ENCODE measurements at regions of chr7 and their contacts with region 1.

Region 1: DNA sequence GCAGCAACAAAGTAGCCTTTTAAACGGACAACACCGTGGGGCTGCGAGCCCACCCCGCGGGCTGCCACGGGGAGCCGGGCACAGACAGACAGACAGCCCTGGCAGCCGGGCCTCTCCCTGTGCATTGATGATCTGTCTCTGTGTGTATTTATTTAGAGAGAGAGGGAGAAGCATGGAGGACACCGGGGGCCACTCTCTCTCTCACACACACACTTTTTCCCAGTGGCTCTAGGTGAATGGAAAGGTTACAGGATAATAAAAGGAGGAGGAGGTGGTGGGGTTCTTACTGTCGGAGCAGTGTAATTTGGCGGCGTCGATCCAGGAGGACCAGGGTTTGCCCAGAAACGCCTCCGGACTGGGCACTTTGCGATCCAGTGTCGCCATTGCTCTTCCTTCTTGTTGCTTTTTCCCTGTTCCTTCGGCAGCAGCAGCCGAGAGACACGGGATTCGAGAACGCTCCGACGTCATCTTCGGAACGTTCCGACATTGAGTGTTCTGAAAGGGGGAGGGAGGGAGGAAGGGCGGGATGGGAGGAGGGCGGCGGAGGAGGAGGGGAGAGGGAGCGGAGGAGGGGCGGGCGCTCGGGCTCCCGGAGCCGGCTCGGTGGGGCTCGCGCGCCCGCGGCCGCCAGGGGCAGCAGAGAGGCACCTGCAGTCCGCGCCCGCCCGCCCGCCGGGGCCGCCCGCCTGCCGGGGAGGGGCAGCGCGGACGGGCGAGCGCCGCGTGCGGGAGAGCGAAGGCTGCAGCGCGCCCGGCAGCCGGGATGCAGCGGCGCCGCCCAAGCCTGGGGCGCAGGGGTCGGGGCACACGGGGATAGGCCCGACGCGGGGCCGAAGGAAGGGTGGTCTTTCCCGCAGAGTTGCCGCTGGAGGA is at the start of gene ATXN7L1:
- DNase-seq: peak; percentile 98
- H3K4me3 ChIP-seq: peak within 1 kb of the TSS; percentile 86 to 90
- H3K27ac ChIP-seq: peak within 1 kb of the TSS; percentile 84 to 96
- H3K4me1 ChIP-seq: peaks cover 0 to 45% of the 10 kb centered on the region in 2 experiments; a peak in 3 of 4 replicates
- H3K27me3 ChIP-seq: no peaks in the 10 kb centered on the region
- CTCF ChIP-seq: peak; percentile 37
- EP300 ChIP-seq: peak in 1 of 2 experiments; percentile 4; a peak in 2 of 4 replicates
- RAD21 ChIP-seq: peak; percentile 36
- polyA plus RNA-seq, gene ATXN7L1: 6.0 and 6.2 TPM in 2 replicates

Region 2: GRCh38 chr7:105721327-105722104 is 154.8 kb before region 1 on chr7:
- CTCF ChIA-PET with region 1: no interaction called
- POLR2A ChIA-PET with region 1: no interaction called
- DNase-seq: no peak
- H3K4me3 ChIP-seq: no peak overlapping the region
- H3K27ac ChIP-seq: no peak overlapping the region
- H3K4me1 ChIP-seq: no peaks in the 10 kb centered on the region; a peak in 1 of 4 replicates
- H3K27me3 ChIP-seq: no peaks in the 10 kb centered on the region
- CTCF ChIP-seq: no peak
- EP300 ChIP-seq: no peak
- RAD21 ChIP-seq: no peak

Region 3: GRCh38 chr7:105849122-105849855 is 27.0 kb before region 1 on chr7:
- CTCF ChIA-PET with region 1: interaction called, 13 read pairs
- POLR2A ChIA-PET with region 1: no interaction called
- DNase-seq: no peak
- H3K4me3 ChIP-seq: no peak overlapping the region
- H3K27ac ChIP-seq: no peak overlapping the region
- H3K4me1 ChIP-seq: peaks cover 14 to 21% of the 10 kb centered on the region in 2 experiments; a peak in 3 of 4 replicates
- H3K27me3 ChIP-seq: no peaks in the 10 kb centered on the region
- CTCF ChIP-seq: no peak
- EP300 ChIP-seq: no peak
- RAD21 ChIP-seq: no peak

Region 4: DNA sequence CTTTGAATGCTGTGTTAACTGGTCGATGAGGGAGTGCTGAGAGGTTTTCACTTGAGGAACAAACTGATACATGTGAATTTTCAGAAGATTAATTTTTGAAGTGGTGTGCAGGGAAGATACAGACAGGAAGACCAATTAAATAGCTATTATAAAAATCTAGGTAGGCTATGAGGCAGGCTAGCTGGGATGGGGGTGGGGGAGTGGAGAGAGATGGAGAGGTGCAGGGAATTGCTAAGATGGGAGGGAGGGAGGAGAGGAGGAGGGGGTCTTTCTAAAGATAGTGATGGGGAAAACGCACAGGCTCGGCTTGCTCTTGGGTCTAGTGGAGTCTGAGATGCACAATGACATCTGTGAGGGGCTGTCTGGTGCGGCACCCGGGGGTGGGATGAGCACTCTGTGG is 15.1 kb before region 1 on chr7:
- CTCF ChIA-PET with region 1: interaction called, 34 read pairs
- POLR2A ChIA-PET with region 1: no interaction called
- DNase-seq: no peak
- H3K4me3 ChIP-seq: no peak overlapping the region
- H3K27ac ChIP-seq: no peak overlapping the region
- H3K4me1 ChIP-seq: no peaks in the 10 kb centered on the region
- H3K27me3 ChIP-seq: no peaks in the 10 kb centered on the region
- CTCF ChIP-seq: no peak
- EP300 ChIP-seq: no peak
- RAD21 ChIP-seq: no peak

Region 5: GRCh38 chr7:105866102-105866801 is 10.1 kb before region 1 on chr7:
- CTCF ChIA-PET with region 1: interaction called, 34 read pairs
- POLR2A ChIA-PET with region 1: no interaction called
- DNase-seq: no peak
- H3K4me3 ChIP-seq: no peak overlapping the region
- H3K27ac ChIP-seq: no peak overlapping the region
- H3K4me1 ChIP-seq: no peaks in the 10 kb centered on the region
- H3K27me3 ChIP-seq: no peaks in the 10 kb centered on the region
- CTCF ChIP-seq: no peak
- EP300 ChIP-seq: no peak
- RAD21 ChIP-seq: no peak

Region 6: GRCh38 chr7:105906695-105907094 is 30.4 kb after region 1 on chr7:
- CTCF ChIA-PET with region 1: interaction called, 10 read pairs
- POLR2A ChIA-PET with region 1: no interaction called
- DNase-seq: no peak
- H3K4me3 ChIP-seq: no peak overlapping the region
- H3K27ac ChIP-seq: peak overlapping the region in 1 of 2 experiments; percentile 14; a peak in 1 of 4 replicates
- H3K4me1 ChIP-seq: peaks cover 0 to 13% of the 10 kb centered on the region in 2 experiments; a peak in 1 of 4 replicates
- H3K27me3 ChIP-seq: no peaks in the 10 kb centered on the region
- CTCF ChIP-seq: no peak
- EP300 ChIP-seq: no peak
- RAD21 ChIP-seq: no peak

Region 7: DNA sequence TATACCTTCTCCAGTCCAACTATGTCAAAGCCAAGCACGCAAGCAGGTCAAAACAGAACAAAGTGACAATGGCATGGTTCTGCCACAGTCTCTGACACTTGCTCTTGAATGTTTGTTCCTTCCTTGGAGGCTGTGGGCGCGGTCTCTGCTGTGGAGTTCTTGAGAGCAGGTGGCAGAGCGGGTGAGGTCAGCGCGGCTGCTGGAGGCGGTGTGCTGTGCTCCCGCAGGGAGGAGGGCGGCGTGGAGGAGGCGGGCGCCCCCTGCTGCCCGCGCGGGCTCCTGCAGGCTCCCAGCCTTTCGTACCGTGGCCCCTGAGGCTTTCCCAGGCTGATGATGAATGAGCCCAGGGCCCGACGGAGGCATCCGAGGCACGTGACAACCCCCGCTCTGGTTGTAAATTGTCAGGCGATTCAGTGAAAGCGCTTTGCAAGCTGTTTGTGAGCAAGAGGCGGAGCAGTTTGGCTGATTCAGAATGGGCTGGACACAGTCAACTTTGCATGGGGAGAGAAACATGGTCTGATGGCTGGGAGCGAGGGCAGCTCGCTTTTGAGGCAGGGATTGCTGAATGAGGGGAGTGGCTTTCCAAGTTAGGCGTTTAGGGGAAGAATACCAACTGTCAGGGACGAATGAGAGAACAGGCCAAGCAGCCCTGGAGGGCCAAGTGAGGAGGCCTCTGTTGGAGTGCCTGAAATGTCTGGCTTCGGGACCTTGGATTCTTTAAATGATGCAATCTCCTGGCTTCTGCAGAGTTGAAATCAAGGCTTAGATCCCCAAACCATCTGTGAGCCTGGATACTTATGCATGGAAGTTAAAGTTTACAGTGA is 133.3 kb after region 1 on chr7:
- CTCF ChIA-PET with region 1: interaction called, 17 read pairs
- POLR2A ChIA-PET with region 1: no interaction called
- DNase-seq: peak; percentile 91
- H3K4me3 ChIP-seq: no peak overlapping the region; a peak in 1 of 4 replicates
- H3K27ac ChIP-seq: peak overlapping the region in 1 of 2 experiments; percentile 7; a peak in 1 of 4 replicates
- H3K4me1 ChIP-seq: peaks cover 8 to 24% of the 10 kb centered on the region in 2 experiments
- H3K27me3 ChIP-seq: no peaks in the 10 kb centered on the region
- CTCF ChIP-seq: peak; percentile 99
- EP300 ChIP-seq: 0 out of 4 replicates have a peak, but pooled peaks have one; percentile 26 to 36
- RAD21 ChIP-seq: peak; percentile 83

Measured in SK-N-SH (cell line).